T-cell (primary cell): ENCODE measurements at regions of chr10 and their contacts with region 1.

Region 1: GRCh38 chr10:68212721-68213352 is 19.1 kb downstream of the ATOH7 start:
- DNase-seq: peak in 1 of 35 experiments; percentile 51
- ATAC-seq: no peak
- H3K4me3 ChIP-seq: no peak overlapping the region
- H3K4me3 Mint-ChIP-seq: no peak overlapping the region
- H3K27ac ChIP-seq: no peak overlapping the region
- H3K27ac Mint-ChIP-seq: no peak overlapping the region
- H3K4me1 ChIP-seq: no peaks in the 10 kb centered on the region
- H3K4me1 Mint-ChIP-seq: no peaks in the 10 kb centered on the region
- H3K27me3 ChIP-seq: peaks cover 4 to 7% of the 10 kb centered on the region in 2 experiments
- H3K27me3 Mint-ChIP-seq: peaks cover 0 to 4% of the 10 kb centered on the region in 2 donors

Region 2: GRCh38 chr10:67401711-67402110 is 811.1 kb before region 1 on chr10:
- CTCF ChIA-PET with region 1: no interaction called
- POLR2A ChIA-PET with region 1: no interaction called
- DNase-seq: no peak
- ATAC-seq: no peak
- H3K4me3 ChIP-seq: no peak overlapping the region
- H3K4me3 Mint-ChIP-seq: no peak overlapping the region
- H3K27ac ChIP-seq: no peak overlapping the region
- H3K27ac Mint-ChIP-seq: no peak overlapping the region
- H3K4me1 ChIP-seq: no peaks in the 10 kb centered on the region
- H3K4me1 Mint-ChIP-seq: no peaks in the 10 kb centered on the region
- H3K27me3 ChIP-seq: peaks cover 0 to 6% of the 10 kb centered on the region in 2 experiments
- H3K27me3 Mint-ChIP-seq: peaks cover 3 to 10% of the 10 kb centered on the region in 2 donors

Region 3: GRCh38 chr10:68348265-68348741 is 135.5 kb after region 1 on chr10:
- CTCF ChIA-PET with region 1: interaction called, 7 to 15 read pairs
- POLR2A ChIA-PET with region 1: no interaction called
- DNase-seq: peak in 33 of 35 experiments; percentile 6 to 74 (median 34)
- ATAC-seq: peak; percentile 66 to 75 (median 68)
- H3K4me3 ChIP-seq: no peak overlapping the region
- H3K4me3 Mint-ChIP-seq: no peak overlapping the region
- H3K27ac ChIP-seq: no peak overlapping the region
- H3K27ac Mint-ChIP-seq: peak overlapping the region; percentile 74 to 86
- H3K4me1 ChIP-seq: no peaks in the 10 kb centered on the region
- H3K4me1 Mint-ChIP-seq: peaks cover 5 to 6% (median 6%) of the 10 kb centered on the region in 3 donors
- H3K27me3 ChIP-seq: no peaks in the 10 kb centered on the region
- H3K27me3 Mint-ChIP-seq: no peaks in the 10 kb centered on the region